Left cardiac atrium (tissue), 4 donors: ENCODE measurements at regions of chr5 and their contacts with region 1.

Region 1: GRCh38 chr5:168219515-168220410 is 71.7 kb upstream of the WWC1 start:
- DNase-seq: no peak
- ATAC-seq: peak; percentile 74 to 79

Region 2: DNA sequence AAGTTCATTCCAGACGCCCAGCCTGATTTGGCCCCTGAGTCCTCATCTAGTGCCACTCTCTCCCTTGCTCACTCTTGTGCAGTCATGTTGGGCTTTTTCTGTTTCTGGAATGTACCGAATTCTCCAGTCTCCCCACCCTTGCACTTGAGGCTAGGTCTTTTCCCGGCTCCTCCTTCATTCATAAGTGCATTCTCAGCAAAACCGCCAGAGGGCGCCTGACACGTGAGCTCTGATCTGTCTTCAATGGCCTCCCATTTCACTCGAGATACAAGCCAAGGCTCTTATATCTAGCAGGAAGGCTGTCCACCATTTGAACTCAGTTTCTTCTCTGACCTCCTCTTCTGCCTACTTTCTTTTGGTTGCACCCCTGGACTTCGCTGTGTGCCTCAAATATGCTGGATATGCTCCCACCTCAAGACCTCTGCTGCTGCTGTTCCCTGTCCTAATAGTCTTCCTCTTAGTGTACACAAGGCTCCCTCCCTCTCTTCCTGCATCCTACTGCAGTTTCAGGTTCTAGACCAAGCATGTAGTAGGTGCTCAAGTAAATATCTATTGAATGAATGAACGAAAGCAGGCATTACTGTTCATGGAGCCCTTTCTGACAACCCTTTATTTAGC is 496.4 kb before region 1 on chr5:
- intact Hi-C with region 1: loop called (anchors 5 to 10 kb)
- DNase-seq: peak; percentile 69
- ATAC-seq: peak; percentile 91 to 92

Region 3: DNA sequence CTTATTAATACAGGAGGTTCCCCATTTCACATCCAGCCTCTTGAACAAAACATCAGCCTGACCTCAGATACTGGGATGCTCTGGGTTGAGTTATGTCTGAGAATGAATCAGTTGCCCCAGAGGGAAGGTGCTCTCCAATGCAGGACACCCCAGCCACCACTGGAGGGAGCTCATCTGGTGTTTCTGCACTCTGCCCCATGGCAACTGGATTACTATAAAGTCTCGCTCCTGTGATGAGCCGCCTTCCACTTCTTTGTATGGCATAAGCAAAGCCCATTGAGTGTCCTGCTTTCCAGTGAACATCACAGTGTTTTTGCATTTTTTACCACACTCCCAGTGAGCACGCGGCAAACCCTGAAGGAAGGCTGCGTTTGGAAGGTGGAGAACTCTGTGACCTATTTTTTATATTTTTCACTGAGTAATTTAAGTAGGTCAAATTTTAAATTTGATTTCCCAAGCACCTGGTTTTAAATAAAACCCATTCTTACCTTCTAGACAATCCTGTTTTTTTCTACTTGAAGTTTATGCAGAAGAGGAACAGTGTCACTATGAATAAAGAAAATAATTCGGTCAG is 105.2 kb before region 1 on chr5:
- intact Hi-C with region 1: loop called (anchors 1 to 5 kb)
- DNase-seq: peak; percentile 37
- ATAC-seq: peak; percentile 53 to 71